ENCODE measurements at regions of chr3 and their contacts with region 1.

Region 1: GRCh38 chr3:128322066-128323022 is 144.3 kb downstream of the DNAJB8 start:
- DNase-seq: peak; percentile 47 to 81 (median 68)
- ATAC-seq: peak; percentile 76
- H3K4me3 ChIP-seq: no peak overlapping the region
- H3K4me3 Mint-ChIP-seq: no peak overlapping the region
- H3K27ac ChIP-seq: no peak overlapping the region
- H3K27ac Mint-ChIP-seq: peak overlapping the region; percentile 78
- H3K4me1 ChIP-seq: peaks cover 64% of the 10 kb centered on the region
- H3K4me1 Mint-ChIP-seq: peaks cover 75% of the 10 kb centered on the region
- H3K27me3 ChIP-seq: no peaks in the 10 kb centered on the region
- H3K27me3 Mint-ChIP-seq: no peaks in the 10 kb centered on the region
- CTCF ChIP-seq: peak; percentile 64

Region 2: DNA sequence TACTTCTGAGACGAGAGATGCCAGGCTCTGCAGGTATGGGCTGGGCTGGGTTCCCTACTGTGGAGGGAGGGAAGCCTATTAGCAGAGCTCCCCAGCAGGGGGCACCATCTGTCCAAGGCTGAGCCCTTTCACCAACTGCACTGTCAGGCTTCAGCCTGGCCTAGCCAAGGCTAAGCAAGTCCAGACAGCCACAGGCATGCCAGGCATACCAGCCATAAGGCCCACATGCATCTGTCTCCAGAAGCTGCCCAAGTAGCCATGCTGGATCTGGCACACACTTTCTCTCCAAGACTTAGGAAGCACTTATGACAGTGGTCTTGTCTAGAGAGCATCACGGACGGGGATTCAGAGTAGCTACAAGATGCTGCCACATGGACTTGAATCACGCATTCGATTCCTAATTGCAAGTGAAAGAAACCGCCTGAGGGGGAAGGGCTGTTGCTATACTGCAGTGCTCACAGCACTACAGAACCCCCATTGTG is 227.1 kb before region 1 on chr3:
- CTCF ChIA-PET with region 1: interaction called, 6 read pairs
- POLR2A ChIA-PET with region 1: interaction called, 3 read pairs
- intact Hi-C with region 1: loop called (anchors 1 kb)
- DNase-seq: peak; percentile 69 to 87 (median 78)
- ATAC-seq: peak; percentile 100
- H3K4me3 ChIP-seq: no peak overlapping the region
- H3K4me3 Mint-ChIP-seq: no peak overlapping the region
- H3K27ac ChIP-seq: no peak overlapping the region
- H3K27ac Mint-ChIP-seq: no peak overlapping the region
- H3K4me1 ChIP-seq: no peaks in the 10 kb centered on the region
- H3K4me1 Mint-ChIP-seq: peaks cover 7% of the 10 kb centered on the region
- H3K27me3 ChIP-seq: no peaks in the 10 kb centered on the region
- H3K27me3 Mint-ChIP-seq: no peaks in the 10 kb centered on the region
- CTCF ChIP-seq: peak; percentile 87

Region 3: GRCh38 chr3:128226795-128227395 is 95.4 kb before region 1 on chr3:
- CTCF ChIA-PET with region 1: no interaction called
- POLR2A ChIA-PET with region 1: no interaction called
- intact Hi-C with region 1: loop called in 1 of 2 experiments (anchors 1 kb)
- DNase-seq: peak in 13 of 14 experiments; percentile 6 to 52 (median 19)
- ATAC-seq: peak; percentile 48
- H3K4me3 ChIP-seq: no peak overlapping the region
- H3K4me3 Mint-ChIP-seq: no peak overlapping the region
- H3K27ac ChIP-seq: no peak overlapping the region
- H3K27ac Mint-ChIP-seq: no peak overlapping the region
- H3K4me1 ChIP-seq: peaks cover 9% of the 10 kb centered on the region
- H3K4me1 Mint-ChIP-seq: peaks cover 35% of the 10 kb centered on the region
- H3K27me3 ChIP-seq: no peaks in the 10 kb centered on the region
- H3K27me3 Mint-ChIP-seq: no peaks in the 10 kb centered on the region
- CTCF ChIP-seq: peak; percentile 68

Region 4: GRCh38 chr3:128307029-128307633 is 15.2 kb before region 1 on chr3:
- CTCF ChIA-PET with region 1: interaction called, 10 read pairs
- POLR2A ChIA-PET with region 1: interaction called, 11 read pairs
- intact Hi-C with region 1: no loop called
- DNase-seq: peak in 3 of 14 experiments; percentile 28 to 44 (median 41)
- ATAC-seq: no peak
- H3K4me3 ChIP-seq: no peak overlapping the region
- H3K4me3 Mint-ChIP-seq: no peak overlapping the region
- H3K27ac ChIP-seq: no peak overlapping the region
- H3K27ac Mint-ChIP-seq: no peak overlapping the region
- H3K4me1 ChIP-seq: peaks cover 14% of the 10 kb centered on the region
- H3K4me1 Mint-ChIP-seq: peaks cover 39% of the 10 kb centered on the region
- H3K27me3 ChIP-seq: no peaks in the 10 kb centered on the region
- H3K27me3 Mint-ChIP-seq: no peaks in the 10 kb centered on the region
- CTCF ChIP-seq: no peak

Region 5: GRCh38 chr3:128584412-128585020 is 262.2 kb after region 1 on chr3:
- CTCF ChIA-PET with region 1: no interaction called
- POLR2A ChIA-PET with region 1: no interaction called
- intact Hi-C with region 1: no loop called
- DNase-seq: peak in 8 of 14 experiments; percentile 8 to 55 (median 18)
- ATAC-seq: peak; percentile 79
- H3K4me3 ChIP-seq: no peak overlapping the region
- H3K4me3 Mint-ChIP-seq: no peak overlapping the region
- H3K27ac ChIP-seq: no peak overlapping the region
- H3K27ac Mint-ChIP-seq: no peak overlapping the region
- H3K4me1 ChIP-seq: no peaks in the 10 kb centered on the region
- H3K4me1 Mint-ChIP-seq: no peaks in the 10 kb centered on the region
- H3K27me3 ChIP-seq: peaks cover 2 to 3% of the 10 kb centered on the region in 2 experiments
- H3K27me3 Mint-ChIP-seq: peaks cover 15% of the 10 kb centered on the region
- CTCF ChIP-seq: no peak

Region 6: GRCh38 chr3:128607710-128608048 is 285.3 kb after region 1 on chr3:
- CTCF ChIA-PET with region 1: no interaction called
- POLR2A ChIA-PET with region 1: no interaction called
- intact Hi-C with region 1: loop called in 1 of 2 experiments (anchors 5 kb)
- DNase-seq: no peak
- ATAC-seq: no peak
- H3K4me3 ChIP-seq: peak overlapping the region; percentile 62
- H3K4me3 Mint-ChIP-seq: no peak overlapping the region
- H3K27ac ChIP-seq: no peak overlapping the region
- H3K27ac Mint-ChIP-seq: no peak overlapping the region
- H3K4me1 ChIP-seq: peaks cover 12% of the 10 kb centered on the region
- H3K4me1 Mint-ChIP-seq: no peaks in the 10 kb centered on the region
- H3K27me3 ChIP-seq: peaks cover 5 to 10% of the 10 kb centered on the region in 2 experiments
- H3K27me3 Mint-ChIP-seq: no peaks in the 10 kb centered on the region
- CTCF ChIP-seq: no peak

Measured in CD4-positive, alpha-beta T cell (primary cell).